ENCODE measurements at regions of chr19 and their contacts with region 1.

Region 1: GRCh38 chr19:21092109-21092508 is 10.1 kb downstream of the ZNF714 start:
- DNase-seq: no peak
- ATAC-seq: no peak

Region 2: GRCh38 chr19:22088541-22089144 is 996.5 kb after region 1 on chr19:
- intact Hi-C with region 1: loop called (anchors 10 kb)
- DNase-seq: no peak
- ATAC-seq: no peak

Measured in sciatic nerve (tissue), 2 donors.